GM18951 (cell line): ENCODE measurements at regions of chr2 and their contacts with region 1.

Region 1: DNA sequence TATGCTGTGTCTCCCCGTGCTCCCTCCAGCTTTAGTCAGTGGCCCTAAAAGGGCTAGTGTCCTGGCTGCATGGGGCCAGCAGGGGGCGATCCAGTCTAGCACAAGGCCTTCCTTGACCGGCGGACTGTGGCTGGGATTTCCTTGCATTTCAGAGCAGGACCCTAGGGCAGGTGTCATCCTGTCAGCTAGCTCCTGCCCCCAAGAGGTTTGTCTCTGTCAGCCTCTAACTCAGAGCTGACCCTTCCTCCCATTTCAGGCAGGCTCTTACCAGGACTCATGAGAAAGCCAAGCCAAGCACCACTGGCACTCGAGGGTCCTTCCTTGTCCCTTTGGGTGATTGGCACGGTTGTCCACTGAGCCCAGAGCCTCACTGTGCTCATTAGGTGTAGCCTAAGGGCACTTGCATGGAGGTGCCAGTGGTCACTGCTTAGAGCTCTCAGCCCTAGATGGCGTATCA is 140.3 kb downstream of the RPIA start:
- POLR2A ChIP-seq: peak; percentile 46

Region 2: DNA sequence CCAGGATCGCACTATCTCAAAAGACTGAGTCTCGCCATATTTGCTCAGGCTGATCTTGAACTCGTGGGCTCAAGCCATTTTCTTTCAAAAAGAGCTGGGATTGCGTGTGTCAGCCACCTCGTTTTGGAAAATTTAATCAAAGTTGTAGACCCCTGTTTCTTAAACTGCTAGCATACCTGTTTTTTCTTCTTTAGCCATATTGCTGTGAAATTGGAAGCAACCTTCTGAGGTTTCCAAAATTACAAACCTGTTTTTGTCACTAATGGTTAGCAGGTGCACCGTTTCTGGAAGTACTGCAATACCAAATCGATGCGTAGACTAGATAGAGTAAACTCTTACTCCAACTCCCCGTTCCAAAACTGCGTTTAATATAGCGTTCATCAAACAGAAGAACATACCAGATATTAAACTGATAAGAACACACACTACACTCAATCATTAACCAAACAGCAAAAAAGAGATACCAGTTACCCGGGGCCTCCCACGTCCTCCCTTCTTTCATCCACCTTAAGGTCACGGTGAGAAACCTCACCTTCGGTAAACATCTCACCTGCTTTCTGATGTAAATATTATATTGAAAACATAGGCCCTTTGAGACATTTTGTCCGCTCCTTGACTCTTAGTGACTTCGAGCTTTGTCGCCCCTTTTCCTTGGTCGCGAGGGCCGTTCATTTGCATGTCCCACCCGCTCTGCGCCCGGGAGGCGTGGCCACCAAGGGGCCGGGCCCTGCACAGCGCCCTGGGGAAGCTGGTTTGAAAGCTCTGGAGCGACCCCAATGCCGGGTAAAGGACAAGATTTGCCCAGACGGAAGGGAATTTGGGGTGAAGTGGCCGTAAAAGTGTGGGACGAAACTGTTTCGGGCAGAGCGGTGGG is 815.5 kb before region 1 on chr2 and contains the start of gene RNU2-63P:
- in situ Hi-C with region 1: no loop called
- POLR2A ChIP-seq: peak; percentile 97

Region 3: DNA sequence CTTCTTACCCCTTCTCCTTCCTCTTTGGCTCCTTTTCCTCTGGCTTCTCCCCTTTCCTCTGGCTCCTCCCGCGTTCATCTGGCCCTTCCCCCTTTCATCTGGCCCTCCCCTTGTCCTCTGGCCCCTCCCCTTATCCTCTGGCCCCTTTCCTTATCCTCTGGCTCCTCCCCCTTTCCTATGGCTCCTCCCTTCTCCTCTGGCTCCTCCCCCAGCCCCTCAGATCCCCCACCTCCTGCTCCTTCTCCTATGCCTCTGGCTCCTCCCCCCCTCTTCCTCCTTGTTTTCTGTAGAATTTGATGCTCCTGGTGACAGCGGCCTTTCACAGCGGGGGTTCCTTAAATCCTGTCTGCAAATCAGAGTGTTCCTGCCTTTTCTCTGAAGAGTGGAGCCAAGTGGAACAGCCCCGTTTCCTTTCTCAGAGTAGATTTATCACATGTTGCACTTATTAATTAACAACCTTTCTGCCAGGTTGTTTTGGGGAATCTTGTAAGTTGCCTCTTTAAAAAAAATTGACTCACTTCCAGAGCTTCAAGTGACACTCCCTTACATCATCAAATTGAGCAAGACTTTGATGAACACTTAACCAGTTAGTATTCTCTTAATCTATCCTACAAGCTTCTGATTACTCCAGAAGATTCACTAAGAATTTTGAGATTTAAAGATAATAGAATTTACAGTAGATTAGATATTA is 731.9 kb before region 1 on chr2:
- in situ Hi-C with region 1: no loop called
- POLR2A ChIP-seq: no peak

Region 4: DNA sequence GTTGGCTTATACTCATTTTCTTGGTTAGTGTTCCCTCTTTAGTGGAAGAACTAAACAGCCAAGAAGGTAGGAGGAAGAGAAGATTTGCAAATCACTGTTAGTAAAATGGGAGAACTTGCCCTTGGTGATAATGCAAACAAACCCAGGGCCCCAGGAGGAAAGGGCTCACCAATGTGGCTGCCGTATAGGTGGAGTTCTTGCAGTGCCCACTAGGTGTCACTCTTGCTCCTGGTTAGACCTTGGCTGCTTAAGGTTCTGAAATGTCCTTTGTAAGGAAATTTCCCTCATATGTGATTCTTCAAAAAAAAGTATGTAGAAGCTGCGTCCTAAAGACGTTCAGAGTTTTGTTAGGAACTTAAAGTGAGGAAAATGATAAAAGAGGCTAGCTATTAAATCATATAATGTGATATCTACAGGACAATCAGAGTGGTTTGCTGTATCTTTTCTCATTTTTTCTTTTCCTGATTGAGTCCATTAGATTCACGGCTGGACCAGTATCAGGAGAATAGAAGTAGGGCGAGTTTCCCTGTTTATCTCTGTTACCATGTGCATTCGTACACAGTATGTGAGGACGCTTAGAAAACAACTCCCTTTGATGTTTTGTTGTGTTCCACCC is 91.7 kb before region 1 on chr2:
- in situ Hi-C with region 1: loop called (anchors 10 kb)
- POLR2A ChIP-seq: no peak

Region 5: GRCh38 chr2:89850881-89851582 is 1019.2 kb after region 1 on chr2:
- in situ Hi-C with region 1: loop called (anchors 25 kb)
- POLR2A ChIP-seq: no peak